H1 (cell line): ENCODE measurements at regions of chr14 and their contacts with region 1.

Region 1: DNA sequence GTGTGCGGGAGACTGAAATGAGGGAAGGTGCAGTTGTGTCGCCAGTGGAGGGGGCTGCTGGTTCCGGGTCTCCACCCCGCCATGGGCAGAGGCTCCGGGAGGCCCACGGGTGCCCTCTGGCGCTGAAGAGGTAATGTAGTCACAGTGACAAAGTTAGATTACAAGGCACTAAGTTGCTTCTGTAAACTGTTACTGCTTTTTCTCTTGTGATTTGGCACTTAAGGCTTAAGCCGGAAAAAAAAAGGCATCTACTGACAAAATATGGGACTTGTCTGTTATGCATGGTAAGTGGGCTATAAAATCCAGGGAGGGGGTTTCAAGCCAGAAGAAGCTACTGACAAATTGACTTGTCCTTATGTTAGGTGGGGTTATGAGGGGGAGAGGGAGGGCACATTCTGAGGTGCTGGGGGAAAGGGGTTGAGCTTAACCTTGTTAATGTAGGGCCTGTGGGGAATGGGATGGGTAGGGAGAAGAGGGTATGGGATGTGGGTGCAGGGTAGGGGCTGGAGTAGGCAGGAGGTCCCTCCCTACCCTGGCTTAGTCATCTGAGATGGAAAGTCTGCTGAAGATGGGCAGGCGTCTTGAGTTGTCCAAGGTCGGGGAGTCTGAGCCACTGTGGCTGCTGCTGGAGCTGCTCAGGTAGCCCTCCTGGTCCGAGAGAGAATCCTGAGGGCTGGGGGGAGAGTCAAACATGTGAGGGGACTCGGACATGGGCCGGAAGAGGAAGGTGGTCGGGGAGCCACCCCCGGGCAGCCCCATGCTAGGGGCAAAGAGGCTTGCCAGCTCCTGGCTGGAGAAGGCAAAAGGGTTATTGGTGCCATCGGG is 3.7 kb downstream of the ZFP36L1 start:
- DNase-seq: peak in 1 of 2 experiments; percentile 71
- H3K4me3 ChIP-seq: peak overlapping the region in 3 of 4 experiments; percentile 9 to 91 (median 14); a peak in 3 of 8 replicates
- H3K27ac ChIP-seq: no peak overlapping the region
- H3K4me1 ChIP-seq: peaks cover 0 to 22% (median 12%) of the 10 kb centered on the region in 4 experiments; a peak in 6 of 7 replicates
- H3K27me3 ChIP-seq: no peaks in the 10 kb centered on the region
- CTCF ChIP-seq: peak; percentile 63 to 94 (median 67)
- EP300 ChIP-seq: no peak
- POLR2A ChIP-seq: no peak; a peak in 1 of 3 replicates
- RAD21 ChIP-seq: peak; percentile 71 to 79

Region 2: GRCh38 chr14:68807148-68807600 is 18.0 kb after region 1 on chr14:
- CTCF ChIA-PET with region 1: interaction called, 11 read pairs
- POLR2A ChIA-PET with region 1: interaction called, 222 read pairs
- DNase-seq: peak in 1 of 2 experiments; percentile 40
- H3K4me3 ChIP-seq: no peak overlapping the region
- H3K27ac ChIP-seq: no peak overlapping the region
- H3K4me1 ChIP-seq: peaks cover 0 to 4% (median under 1%) of the 10 kb centered on the region in 4 experiments; a peak in 3 of 7 replicates
- H3K27me3 ChIP-seq: no peaks in the 10 kb centered on the region
- CTCF ChIP-seq: no peak
- EP300 ChIP-seq: no peak
- POLR2A ChIP-seq: no peak
- RAD21 ChIP-seq: no peak